ENCODE measurements at regions of chr2 and their contacts with region 1.

Region 1: DNA sequence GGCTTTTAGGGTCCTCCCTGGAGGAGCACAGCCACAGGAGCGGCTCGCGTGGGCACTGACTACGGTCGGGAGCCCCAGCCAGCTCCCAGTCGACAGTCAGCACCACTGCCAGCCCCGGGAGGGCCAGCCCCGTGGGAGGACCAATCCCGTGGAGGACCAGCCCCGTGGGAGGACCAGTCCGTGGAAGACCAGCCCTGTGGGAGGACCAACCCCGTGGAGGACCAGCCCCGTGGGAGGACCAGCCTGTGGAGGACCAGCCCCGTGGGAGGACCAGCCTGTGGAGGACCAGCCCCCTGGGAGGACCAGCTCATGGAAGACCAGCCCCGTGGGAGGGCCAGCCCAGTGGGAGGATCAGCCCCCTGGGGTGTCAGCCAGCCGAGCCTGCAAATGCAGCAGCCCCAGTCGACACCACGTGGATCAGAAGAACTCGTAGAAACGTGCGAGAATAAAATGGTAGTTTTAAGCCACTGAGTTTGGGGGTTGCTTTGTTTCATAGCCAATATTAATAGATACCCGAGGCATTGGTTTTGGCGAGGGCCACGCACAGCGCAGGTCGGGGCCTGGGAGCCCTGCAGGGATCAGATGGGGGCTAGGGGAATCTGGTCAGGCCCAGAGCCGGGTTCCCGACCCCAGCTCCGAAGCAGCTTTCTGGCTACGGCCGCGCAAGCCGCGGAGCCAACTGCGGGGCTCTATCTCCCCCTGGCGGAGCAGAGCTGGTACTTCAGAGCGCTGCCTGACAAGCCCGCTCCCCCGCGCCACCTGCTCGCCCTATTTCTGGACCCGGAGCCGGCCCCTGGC is 73.0 kb downstream of the TEX51 start:
- DNase-seq: peak; percentile 87
- CTCF ChIP-seq: peak; percentile 96

Region 2: DNA sequence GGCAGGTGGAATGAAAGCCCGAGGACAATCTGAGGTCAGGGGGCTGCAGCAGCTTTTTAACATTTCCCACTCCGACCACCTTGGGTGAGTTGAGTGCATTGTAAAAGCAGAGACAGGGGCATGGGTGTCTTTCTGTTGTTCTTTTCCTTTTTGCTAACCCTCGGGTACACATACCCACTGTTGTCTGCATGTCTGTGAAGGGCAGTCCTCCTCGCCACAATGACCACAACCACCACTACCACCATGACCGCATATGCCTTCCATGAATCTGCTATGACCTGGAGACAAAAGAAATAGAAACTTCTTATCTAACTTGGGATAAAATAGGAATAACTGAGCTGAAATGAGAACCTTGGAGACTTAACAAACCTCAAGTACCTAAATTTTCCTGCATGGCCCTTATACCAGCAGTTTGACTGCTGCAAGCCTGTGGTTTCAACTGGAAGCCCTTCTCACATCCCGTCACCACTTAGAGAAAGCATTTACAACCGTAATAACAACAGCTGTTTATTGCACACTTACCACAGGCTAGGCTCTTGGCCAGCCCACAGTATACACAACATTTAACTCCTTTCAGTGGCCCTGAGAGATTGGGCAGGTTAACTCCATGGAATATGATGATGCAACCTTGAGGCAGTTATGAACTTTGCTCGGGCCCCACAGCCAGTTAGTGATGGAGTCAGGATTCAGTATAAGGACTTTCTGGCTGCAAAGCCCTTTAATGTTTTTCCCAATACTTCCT is 235.4 kb before region 1 on chr2:
- CTCF ChIA-PET with region 1: no interaction called
- POLR2A ChIA-PET with region 1: no interaction called
- DNase-seq: no peak
- CTCF ChIP-seq: no peak

Region 3: DNA sequence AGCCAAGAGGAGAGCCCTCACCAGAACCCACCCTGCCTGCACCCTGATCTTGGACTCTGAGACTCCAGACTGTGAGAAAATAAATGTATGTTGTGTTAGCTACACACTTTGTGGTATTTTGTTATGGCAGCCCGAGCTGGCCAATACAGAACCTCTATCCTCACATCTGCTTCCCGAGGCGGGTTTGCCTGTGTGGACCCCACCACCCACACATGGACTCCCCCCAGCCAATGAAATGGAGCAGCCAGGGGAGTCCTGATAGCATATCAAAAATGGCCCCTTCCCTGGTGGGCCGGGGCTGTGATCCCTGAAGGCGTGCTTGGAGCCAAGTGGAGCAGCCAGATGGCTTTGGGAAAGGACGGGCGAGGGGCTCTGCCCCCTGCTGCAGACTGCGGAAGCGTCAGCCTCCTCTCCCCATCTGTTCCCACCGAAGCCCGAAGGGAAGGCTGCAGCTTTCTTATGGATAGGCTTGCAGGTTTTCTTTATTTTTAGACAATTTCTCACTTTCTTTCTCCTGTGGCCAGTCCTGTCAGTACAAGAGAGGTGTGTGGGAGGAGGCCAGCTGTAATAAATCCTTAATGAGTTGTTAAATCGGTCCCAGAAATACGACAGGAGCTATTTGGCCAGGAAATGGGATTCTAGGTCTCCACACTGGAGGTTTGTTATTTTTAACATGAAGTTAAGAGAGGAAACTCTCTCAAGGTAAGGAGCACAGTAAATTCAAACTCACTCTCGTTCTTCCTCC is 38.5 kb before region 1 on chr2:
- CTCF ChIA-PET with region 1: interaction called, 10 read pairs
- POLR2A ChIA-PET with region 1: no interaction called
- DNase-seq: no peak
- CTCF ChIP-seq: no peak

Region 4: DNA sequence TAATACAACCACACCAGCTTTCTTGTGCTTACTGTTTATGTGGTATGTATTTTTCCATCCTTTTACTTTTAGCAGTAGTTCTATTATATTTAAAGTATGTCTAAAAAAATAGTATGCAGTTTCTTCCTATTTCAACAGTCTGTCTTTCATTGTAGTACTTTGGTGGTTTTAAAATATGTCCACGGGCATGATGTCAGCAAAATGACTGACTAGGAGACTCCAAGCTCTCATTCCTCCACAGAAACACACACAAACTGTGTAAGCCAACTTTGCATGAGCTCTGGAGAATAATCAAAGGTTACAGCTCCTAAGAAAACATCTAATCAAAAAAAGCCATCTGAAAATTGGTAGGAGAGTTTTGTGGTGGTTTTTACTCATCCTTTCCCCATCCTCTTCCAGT is 16.8 kb before region 1 on chr2:
- CTCF ChIA-PET with region 1: interaction called, 11 read pairs
- POLR2A ChIA-PET with region 1: no interaction called
- DNase-seq: no peak
- CTCF ChIP-seq: no peak